Naive thymus-derived CD4-positive, alpha-beta T cell (primary cell): ENCODE measurements at regions of chr16 and their contacts with region 1.

Region 1: DNA sequence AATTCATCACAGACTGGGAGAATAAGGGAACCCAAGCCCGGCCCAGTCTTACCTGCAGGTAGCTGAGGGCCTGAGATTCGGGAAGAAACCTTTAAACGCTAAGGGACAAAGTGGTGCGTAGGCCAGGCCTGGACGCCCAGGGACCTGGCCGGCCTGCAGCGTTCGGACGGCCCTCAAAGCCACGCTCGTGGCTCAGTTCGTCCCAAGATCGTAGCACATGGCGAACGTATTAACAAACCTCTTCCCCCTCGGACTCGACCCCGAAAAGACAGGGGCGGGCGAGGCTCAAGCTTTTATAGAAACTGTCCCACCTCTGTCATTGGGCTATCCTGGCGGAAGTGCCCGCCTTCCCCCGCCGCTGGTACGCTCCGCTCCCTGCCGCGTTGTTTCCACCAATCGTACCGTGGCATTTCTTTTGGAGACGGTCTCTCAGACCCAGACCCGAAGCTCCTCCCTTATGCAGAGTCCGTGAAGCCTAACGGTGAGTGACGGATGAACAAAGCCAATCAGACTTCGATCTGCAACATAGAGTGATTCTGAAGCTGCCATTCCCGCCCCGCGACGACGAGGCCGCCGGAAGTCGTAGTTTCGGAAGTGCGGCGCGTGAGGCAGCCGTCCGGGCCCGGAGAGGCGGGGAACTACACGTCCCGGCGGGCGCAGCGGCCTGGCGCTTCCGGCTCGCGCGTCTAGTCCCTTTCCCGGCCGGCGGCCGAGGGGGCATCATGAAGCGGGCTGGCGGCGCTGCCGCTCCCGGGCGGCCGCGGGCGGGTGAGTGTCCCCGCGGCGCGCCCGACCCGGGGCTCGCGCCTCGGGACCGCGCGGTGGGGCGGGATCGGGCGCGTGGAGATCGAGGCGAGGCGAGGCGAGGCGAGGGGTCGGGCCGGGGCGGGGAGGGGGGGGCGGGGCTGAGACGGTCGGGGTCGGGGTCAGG is at the start of gene TRAF7:
- DNase-seq: peak; percentile 85 to 99 (median 98)
- ATAC-seq: peak; percentile 95
- H3K4me3 ChIP-seq: peak within 1 kb of the TSS; percentile 79
- H3K4me3 Mint-ChIP-seq: peak within 1 kb of the TSS; percentile 85 to 99 (median 94)
- H3K27ac ChIP-seq: peak within 1 kb of the TSS; percentile 80
- H3K27ac Mint-ChIP-seq: peak within 1 kb of the TSS; percentile 78 to 95 (median 91)
- H3K4me1 ChIP-seq: peaks cover 21 to 52% of the 10 kb centered on the region in 2 donors
- H3K4me1 Mint-ChIP-seq: peaks cover 20 to 59% (median 44%) of the 10 kb centered on the region in 7 donors
- H3K27me3 ChIP-seq: no peaks in the 10 kb centered on the region
- H3K27me3 Mint-ChIP-seq: no peaks in the 10 kb centered on the region
- total RNA-seq, gene TRAF7: 30.0 to 58.3 (median 36.7) TPM

Region 2: GRCh38 chr16:1492923-1493745 is 662.2 kb before region 1 on chr16 and contains the start of gene TELO2:
- CTCF ChIA-PET with region 1: no interaction called
- POLR2A ChIA-PET with region 1: no interaction called
- intact Hi-C with region 1: loop called in 1 of 2 experiments (anchors 10 kb)
- DNase-seq: peak; percentile 82 to 96 (median 90)
- ATAC-seq: peak; percentile 96
- H3K4me3 ChIP-seq: peak within 1 kb of the TSS; percentile 59
- H3K4me3 Mint-ChIP-seq: peak within 1 kb of the TSS; percentile 83 to 99 (median 94)
- H3K27ac ChIP-seq: peak within 1 kb of the TSS; percentile 88
- H3K27ac Mint-ChIP-seq: peak within 1 kb of the TSS; percentile 97 to 100 (median 99)
- H3K4me1 ChIP-seq: peaks cover 12 to 17% of the 10 kb centered on the region in 2 donors
- H3K4me1 Mint-ChIP-seq: peaks cover 9 to 20% (median 12%) of the 10 kb centered on the region in 7 donors
- H3K27me3 ChIP-seq: no peaks in the 10 kb centered on the region
- H3K27me3 Mint-ChIP-seq: no peaks in the 10 kb centered on the region
- total RNA-seq, gene TELO2: 46.9 to 58.9 (median 50.3) TPM

Region 3: GRCh38 chr16:1964506-1965395 is 190.6 kb before region 1 on chr16 and contains the start of gene RPS2:
- CTCF ChIA-PET with region 1: interaction called, 3 read pairs
- POLR2A ChIA-PET with region 1: interaction called, 44 read pairs
- intact Hi-C with region 1: loop called (anchors 1 kb)
- DNase-seq: peak; percentile 94 to 99 (median 97)
- ATAC-seq: peak; percentile 97
- H3K4me3 ChIP-seq: peak within 1 kb of the TSS; percentile 81
- H3K4me3 Mint-ChIP-seq: peak within 1 kb of the TSS; percentile 89 to 97 (median 94)
- H3K27ac ChIP-seq: peak within 1 kb of the TSS; percentile 100
- H3K27ac Mint-ChIP-seq: peak within 1 kb of the TSS; percentile 95 to 98 (median 97)
- H3K4me1 ChIP-seq: peaks cover 25 to 41% of the 10 kb centered on the region in 2 donors
- H3K4me1 Mint-ChIP-seq: peaks cover 21 to 49% (median 32%) of the 10 kb centered on the region in 7 donors
- H3K27me3 ChIP-seq: no peaks in the 10 kb centered on the region
- H3K27me3 Mint-ChIP-seq: no peaks in the 10 kb centered on the region
- total RNA-seq, gene RPS2: 2,562 to 3,376 (median 2,918) TPM

Region 4: DNA sequence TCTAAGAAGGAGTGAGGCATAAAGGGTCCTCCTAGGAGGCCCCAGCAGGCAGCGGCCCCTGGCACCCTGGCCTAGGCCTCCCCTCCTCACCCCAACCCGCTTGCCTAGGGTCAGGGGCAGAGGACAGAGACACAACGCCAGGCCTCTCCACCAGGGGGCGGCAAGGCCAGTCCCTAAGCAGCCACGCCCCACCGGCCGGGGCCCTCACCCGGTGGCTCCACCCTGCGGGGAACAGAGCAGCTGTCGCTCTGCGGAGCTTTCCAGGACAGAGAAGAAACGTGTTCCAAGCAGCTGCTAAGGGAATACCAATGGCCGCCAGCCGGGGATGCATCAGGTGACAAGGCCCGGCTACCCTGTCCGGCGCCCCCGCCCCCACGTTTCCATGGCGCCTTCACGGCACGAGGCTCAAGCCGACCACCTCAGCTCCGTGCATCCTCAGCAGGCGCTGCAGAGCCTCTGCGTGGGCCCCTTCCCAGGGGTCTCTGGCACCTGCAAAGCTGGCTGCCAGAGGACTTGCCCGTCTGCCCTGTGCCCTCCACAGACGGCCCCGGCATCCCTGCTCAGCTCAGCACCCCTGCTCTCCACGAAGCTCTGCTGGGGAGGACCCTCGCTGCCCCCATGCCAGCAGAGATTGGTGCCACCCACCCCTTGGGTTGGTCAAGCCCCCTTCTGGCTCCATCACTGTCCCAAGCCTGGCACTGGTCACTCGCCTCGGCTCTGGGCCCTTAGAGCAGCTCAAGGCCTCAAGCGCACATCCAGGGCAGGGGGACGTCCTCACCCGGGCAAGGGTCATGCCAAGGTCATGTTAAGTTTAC is 151.3 kb before region 1 on chr16:
- CTCF ChIA-PET with region 1: interaction called, 11 read pairs
- POLR2A ChIA-PET with region 1: interaction called, 11 read pairs
- intact Hi-C with region 1: loop called in 1 of 2 experiments (anchors 1 kb)
- DNase-seq: peak; percentile 71 to 91 (median 83)
- ATAC-seq: peak; percentile 98
- H3K4me3 ChIP-seq: no peak overlapping the region
- H3K4me3 Mint-ChIP-seq: peak overlapping the region in 3 of 10 donors; percentile 35 to 66 (median 58)
- H3K27ac ChIP-seq: no peak overlapping the region
- H3K27ac Mint-ChIP-seq: no peak overlapping the region
- H3K4me1 ChIP-seq: peaks cover 27 to 29% of the 10 kb centered on the region in 2 donors
- H3K4me1 Mint-ChIP-seq: peaks cover 20 to 41% (median 30%) of the 10 kb centered on the region in 7 donors
- H3K27me3 ChIP-seq: no peaks in the 10 kb centered on the region
- H3K27me3 Mint-ChIP-seq: no peaks in the 10 kb centered on the region

Region 5: DNA sequence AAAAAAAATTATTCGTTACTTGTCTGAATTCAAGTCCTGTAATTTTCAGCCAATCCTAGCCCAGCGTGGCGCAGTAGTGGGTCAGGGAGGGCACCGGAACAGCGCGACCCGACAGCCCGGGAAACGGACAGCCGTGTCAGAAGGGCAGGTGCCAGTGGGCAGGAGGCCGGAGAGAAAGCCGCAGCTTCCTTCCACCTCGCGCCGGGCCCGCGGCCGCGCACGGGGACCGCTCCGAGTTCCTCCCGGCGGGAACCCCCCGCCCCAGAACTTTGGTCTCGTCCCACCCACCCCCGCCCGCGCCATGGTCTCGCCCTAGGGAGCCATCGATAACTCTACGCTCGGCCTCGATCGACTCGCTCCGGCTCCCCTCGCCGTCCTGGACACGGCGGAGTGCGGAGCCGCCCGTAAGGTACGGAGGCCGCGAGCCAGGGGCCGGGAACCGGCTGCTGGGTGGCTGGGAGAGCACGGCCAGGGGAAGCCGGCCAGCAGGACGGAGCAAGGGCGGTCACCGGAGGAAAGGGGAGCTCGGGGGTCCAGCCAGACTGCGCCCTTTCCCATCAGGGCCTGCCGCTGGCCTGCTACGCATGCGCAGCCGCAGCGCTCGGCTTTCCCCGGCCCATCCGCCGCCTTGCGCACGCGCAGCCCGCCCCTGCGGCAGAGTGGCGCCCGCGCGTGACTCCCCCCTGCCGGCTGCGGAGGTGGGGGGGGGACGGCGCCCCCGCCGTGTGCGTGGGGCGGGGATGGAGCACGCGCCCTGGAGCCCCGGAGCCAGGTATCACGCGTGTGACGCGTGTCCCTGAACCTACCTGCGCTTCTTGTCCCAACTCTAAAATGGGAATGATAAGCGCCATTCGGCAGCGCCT is 50.0 kb after region 1 on chr16 and contains the start of gene MLST8:
- CTCF ChIA-PET with region 1: no interaction called
- POLR2A ChIA-PET with region 1: interaction called, 28 read pairs
- intact Hi-C with region 1: loop called (anchors 1 to 5 kb)
- DNase-seq: peak; percentile 88 to 100 (median 98)
- ATAC-seq: peak; percentile 97
- H3K4me3 ChIP-seq: peak within 1 kb of the TSS; percentile 93
- H3K4me3 Mint-ChIP-seq: peak within 1 kb of the TSS; percentile 80 to 95 (median 88)
- H3K27ac ChIP-seq: peak within 1 kb of the TSS; percentile 97
- H3K27ac Mint-ChIP-seq: peak within 1 kb of the TSS; percentile 70 to 91 (median 86)
- H3K4me1 ChIP-seq: peaks cover 11 to 13% of the 10 kb centered on the region in 2 donors
- H3K4me1 Mint-ChIP-seq: peaks cover 7 to 29% (median 21%) of the 10 kb centered on the region in 7 donors
- H3K27me3 ChIP-seq: no peaks in the 10 kb centered on the region
- H3K27me3 Mint-ChIP-seq: peaks cover 0 to 11% (median 0%) of the 10 kb centered on the region in 5 donors
- total RNA-seq, gene MLST8: 25.1 to 41.2 (median 35.5) TPM

Region 6: GRCh38 chr16:2267913-2268666 is 112.7 kb after region 1 on chr16 and contains the start of gene RNPS1:
- CTCF ChIA-PET with region 1: no interaction called
- POLR2A ChIA-PET with region 1: interaction called, 9 read pairs
- intact Hi-C with region 1: loop called (anchors 1 to 5 kb)
- DNase-seq: peak; percentile 93 to 98 (median 96)
- ATAC-seq: peak; percentile 92
- H3K4me3 ChIP-seq: peak within 1 kb of the TSS; percentile 99
- H3K4me3 Mint-ChIP-seq: peak within 1 kb of the TSS; percentile 93 to 98 (median 95)
- H3K27ac ChIP-seq: peak within 1 kb of the TSS; percentile 91
- H3K27ac Mint-ChIP-seq: peak within 1 kb of the TSS; percentile 95 to 99 (median 98)
- H3K4me1 ChIP-seq: peaks cover 13 to 15% of the 10 kb centered on the region in 2 donors
- H3K4me1 Mint-ChIP-seq: peaks cover 15 to 42% (median 35%) of the 10 kb centered on the region in 7 donors
- H3K27me3 ChIP-seq: no peaks in the 10 kb centered on the region
- H3K27me3 Mint-ChIP-seq: peaks cover 0 to 2% (median 0%) of the 10 kb centered on the region in 5 donors
- total RNA-seq, gene RNPS1: 136 to 250 (median 220) TPM